Adrenal gland (tissue), 19 donors: ENCODE measurements at regions of chr17 and their contacts with region 1.

Region 1: GRCh38 chr17:57803025-57803424 is 46.8 kb downstream of the MRPS23 start:
- DNase-seq: no peak
- H3K4me3 ChIP-seq: no peak overlapping the region
- H3K27ac ChIP-seq: no peak overlapping the region
- H3K4me1 ChIP-seq: no peaks in the 10 kb centered on the region
- H3K27me3 ChIP-seq: no peaks in the 10 kb centered on the region
- CTCF ChIP-seq: no peak
- POLR2A ChIP-seq: no peak

Region 2: DNA sequence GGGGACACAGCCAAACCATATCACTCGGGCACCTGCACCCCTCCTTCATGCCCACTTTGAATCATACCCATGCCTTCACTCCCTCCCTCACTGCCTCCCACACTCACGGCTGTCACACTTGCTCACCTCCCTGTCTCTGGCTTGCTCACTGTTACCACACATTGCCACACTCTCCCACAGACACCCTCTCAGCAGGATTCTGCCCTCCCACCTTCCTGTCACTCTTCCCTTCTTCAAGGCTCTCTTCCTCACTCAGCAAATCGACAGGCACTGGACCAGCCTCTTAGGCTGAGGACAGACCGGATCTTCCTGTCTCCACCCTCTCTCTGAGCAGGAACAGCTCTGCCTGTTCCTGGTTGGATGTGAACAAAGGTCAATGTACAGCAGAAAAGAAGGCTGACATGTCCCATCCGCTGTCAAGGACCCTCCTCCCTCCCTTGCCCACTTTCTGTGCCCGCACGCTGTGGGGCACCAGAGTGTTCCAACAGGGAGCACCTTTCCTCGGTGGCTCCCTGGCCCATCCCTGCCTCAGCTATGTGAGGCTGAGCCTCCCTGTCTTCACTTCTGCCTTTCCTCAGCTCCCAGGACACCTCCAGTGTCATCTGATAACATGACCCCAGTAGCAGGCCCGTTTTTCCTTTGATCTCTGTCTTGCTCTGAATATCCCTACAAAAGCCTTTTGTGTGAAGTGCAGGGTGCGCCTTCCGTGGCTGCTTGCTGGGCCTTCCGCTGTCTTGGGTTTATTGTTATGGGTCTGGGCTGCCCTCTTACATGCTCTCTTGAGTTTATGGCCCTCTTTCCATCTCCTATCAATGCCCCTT is 104.9 kb before region 1 on chr17:
- intact Hi-C with region 1: loop called in 1 of 2 experiments (anchors 10 kb)
- DNase-seq: no peak
- H3K4me3 ChIP-seq: no peak overlapping the region
- H3K27ac ChIP-seq: no peak overlapping the region
- H3K4me1 ChIP-seq: peaks cover 0 to 3% of the 10 kb centered on the region in 2 donors
- H3K27me3 ChIP-seq: no peaks in the 10 kb centered on the region
- CTCF ChIP-seq: no peak
- POLR2A ChIP-seq: no peak

Region 3: DNA sequence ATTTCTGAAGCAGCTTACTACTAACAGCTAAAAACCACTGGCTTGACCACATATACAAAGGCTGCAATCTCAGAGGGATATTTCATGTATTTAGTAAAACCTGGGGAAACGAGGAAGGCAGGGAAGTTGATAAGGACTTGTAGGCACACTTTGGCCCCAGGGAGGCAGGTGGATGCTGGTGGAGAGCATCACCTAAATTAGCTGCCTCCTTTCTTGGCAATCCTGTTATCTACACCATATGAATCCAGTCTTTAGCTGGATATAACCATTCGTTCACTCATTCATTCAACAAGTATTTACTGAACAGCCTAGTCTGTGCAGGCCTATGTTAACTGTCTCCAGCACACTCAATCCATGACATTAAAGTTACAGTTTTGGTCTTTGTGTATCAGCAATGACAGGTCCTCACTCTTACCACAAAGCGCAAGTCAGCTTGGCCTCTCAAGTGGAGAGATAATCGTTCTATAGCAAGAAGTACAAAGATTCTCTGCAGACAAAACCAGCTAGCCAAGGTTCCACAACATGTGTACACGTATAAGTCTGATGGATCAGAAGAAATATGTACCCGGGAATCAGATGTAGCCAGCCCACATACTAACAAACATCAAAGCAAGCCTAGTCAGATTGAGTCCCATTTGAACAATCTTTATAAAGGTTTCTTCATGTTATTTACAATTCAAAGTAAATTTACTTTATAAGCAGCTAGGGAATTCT is 36.0 kb after region 1 on chr17:
- intact Hi-C with region 1: no loop called
- DNase-seq: peak in 1 of 7 donors; percentile 15
- H3K4me3 ChIP-seq: no peak overlapping the region
- H3K27ac ChIP-seq: no peak overlapping the region
- H3K4me1 ChIP-seq: peaks cover 12 to 19% of the 10 kb centered on the region in 2 donors
- H3K27me3 ChIP-seq: no peaks in the 10 kb centered on the region
- CTCF ChIP-seq: no peak
- POLR2A ChIP-seq: no peak